ENCODE measurements at regions of chr12 and their contacts with region 1.

Region 1: DNA sequence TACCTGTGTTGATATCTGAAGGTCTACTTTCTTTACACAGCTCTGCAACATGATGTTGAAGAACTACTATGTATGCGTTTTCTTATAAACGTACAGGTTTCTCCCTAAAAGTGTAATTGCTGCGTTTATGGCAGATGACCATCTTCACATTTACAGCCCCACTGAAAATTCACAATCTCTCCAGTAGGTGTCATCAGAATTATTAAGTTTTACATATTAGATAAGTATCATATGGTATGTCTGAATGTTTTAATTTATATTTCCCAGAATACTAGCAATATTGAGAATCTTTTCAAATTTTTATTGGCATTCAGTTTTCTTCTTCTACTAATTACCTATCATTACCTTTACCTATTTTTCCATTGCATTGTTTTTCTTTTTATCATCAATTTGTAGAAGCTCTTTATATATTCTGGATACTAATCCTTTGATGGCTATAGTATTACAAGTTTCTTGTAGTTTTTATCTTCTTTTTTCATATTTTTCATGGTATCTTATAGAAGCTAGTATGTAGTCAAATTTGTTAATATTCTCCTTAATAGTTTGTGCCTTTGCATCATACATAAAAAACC is 123.5 kb downstream of the CAPZA3 start:
- DNase-seq: peak; percentile 60
- H3K4me3 ChIP-seq: no peak overlapping the region
- H3K27ac ChIP-seq: no peak overlapping the region
- H3K4me1 ChIP-seq: no peaks in the 10 kb centered on the region
- H3K27me3 ChIP-seq: peaks cover 2 to 3% of the 10 kb centered on the region in 2 experiments
- CTCF ChIP-seq: peak; percentile 19 to 35
- POLR2A ChIP-seq: no peak

Region 2: DNA sequence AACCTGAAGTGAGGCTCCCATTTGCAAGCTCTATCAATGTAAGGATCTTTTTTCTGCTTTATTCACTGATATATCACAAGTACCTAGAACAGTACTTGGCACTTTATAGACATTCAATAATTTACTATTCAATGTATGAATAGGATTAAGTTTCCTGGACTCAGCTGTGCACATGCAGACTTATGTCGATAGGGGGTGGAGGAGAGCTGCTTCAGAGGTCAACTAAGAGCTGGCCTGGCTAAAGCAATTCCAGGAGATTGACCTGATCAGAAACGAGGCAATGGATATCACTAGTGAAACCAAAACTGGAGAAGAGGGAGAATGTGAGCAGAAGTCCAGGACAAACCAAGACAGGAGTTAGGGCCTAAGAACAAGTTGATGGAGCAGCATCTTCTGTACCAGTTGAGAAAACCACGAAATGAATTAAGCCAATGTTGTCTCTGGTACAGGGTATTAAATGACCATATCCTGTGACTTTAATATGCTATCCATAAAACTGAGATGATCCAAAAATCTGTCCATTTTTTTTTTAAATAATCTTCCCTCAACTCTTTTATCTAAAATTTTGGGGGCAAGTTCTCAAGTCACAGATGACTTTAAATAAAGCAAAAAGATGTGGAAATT is 430.8 kb before region 1 on chr12:
- CTCF ChIA-PET with region 1: no interaction called
- POLR2A ChIA-PET with region 1: no interaction called
- dilution Hi-C with region 1: no loop called
- intact Hi-C with region 1: loop called (anchors 10 kb)
- DNase-seq: peak; percentile 62
- H3K4me3 ChIP-seq: no peak overlapping the region
- H3K27ac ChIP-seq: no peak overlapping the region
- H3K4me1 ChIP-seq: no peaks in the 10 kb centered on the region
- H3K27me3 ChIP-seq: no peaks in the 10 kb centered on the region
- CTCF ChIP-seq: peak; percentile 69 to 77
- POLR2A ChIP-seq: no peak

Region 3: DNA sequence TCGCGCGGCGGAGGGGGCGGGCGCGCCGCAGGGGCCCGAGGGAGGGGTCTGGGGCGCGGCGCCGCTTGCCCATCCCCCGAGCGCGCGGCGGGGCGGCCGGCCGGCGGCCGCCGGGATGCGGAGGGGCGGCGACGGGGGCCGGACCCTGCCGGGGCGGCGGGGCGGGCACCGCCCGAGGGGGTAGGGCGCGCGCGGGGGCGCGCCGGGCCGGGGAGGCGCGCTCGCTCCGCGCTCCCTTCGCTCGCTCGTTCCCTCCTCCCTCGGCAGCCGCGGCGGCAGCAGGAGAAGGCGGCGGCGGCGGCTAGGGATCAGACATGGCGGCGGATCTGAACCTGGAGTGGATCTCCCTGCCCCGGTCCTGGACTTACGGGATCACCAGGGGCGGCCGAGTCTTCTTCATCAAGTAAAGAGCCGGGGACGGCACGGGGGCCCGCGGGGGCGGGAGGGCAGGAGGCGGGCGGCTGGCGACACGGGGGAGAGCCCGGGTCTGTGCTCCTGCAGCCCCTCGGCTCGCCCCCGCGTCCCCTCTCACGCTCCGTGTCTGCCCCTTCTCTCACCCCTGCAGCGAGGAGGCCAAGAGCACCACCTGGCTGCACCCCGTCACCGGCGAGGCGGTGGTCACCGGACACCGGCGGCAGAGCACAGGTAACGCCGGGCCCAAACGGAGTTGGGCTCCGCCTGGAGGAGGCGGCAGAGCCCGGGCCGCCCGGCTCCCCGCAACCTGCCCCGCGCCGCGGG is 268.3 kb after region 1 on chr12 and contains the start of gene PLEKHA5:
- CTCF ChIA-PET with region 1: no interaction called
- POLR2A ChIA-PET with region 1: interaction called, 14 read pairs
- dilution Hi-C with region 1: no loop called
- intact Hi-C with region 1: no loop called
- DNase-seq: peak; percentile 31
- H3K4me3 ChIP-seq: peak within 1 kb of the TSS; percentile 62 to 100 (median 69)
- H3K27ac ChIP-seq: peak within 1 kb of the TSS; percentile 34
- H3K4me1 ChIP-seq: peaks cover 8% of the 10 kb centered on the region
- H3K27me3 ChIP-seq: no peaks in the 10 kb centered on the region
- CTCF ChIP-seq: no peak
- POLR2A ChIP-seq: peak; percentile 16
- total RNA-seq, gene PLEKHA5: 12.7 and 13.4 TPM in 2 replicates

Region 4: DNA sequence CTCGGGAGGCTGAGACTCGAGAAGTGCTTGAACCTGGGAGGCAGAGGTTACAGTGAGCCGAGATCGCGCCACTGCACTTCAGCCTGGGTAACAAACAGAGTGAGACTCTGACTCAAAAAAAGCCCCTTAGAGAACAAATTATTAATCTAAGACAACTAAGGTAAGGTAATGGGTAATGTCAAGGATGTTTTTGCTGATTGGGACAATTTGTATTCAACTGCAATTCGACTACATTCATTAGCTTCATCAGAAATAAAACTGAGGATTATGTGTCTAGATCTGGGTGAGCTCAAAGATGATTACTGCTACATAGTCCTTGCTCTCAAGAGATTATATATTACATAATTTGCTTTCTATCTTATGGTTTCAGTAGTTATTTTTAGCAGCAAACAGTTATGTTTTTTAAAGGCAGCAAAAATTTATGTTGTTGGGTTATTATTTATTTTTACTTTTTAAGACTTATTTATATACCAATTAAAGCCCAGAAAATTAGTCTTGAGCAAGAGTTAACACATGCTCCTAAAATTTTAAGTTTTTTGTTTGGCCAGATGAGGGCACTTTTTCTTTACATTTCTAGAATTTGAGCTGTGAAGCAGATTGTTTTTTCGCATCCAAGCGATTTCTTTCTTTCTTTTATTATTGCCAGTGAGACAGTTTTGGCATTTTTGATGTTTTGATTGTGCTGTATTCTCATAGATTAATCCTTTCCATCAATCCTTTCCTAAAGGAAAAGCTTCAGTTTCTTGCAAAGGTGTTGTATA is 320.5 kb after region 1 on chr12:
- CTCF ChIA-PET with region 1: interaction called, 69 read pairs
- POLR2A ChIA-PET with region 1: no interaction called
- dilution Hi-C with region 1: no loop called
- intact Hi-C with region 1: loop called (anchors 1 kb)
- DNase-seq: peak; percentile 26
- H3K4me3 ChIP-seq: no peak overlapping the region
- H3K27ac ChIP-seq: no peak overlapping the region
- H3K4me1 ChIP-seq: no peaks in the 10 kb centered on the region
- H3K27me3 ChIP-seq: no peaks in the 10 kb centered on the region
- CTCF ChIP-seq: no peak
- POLR2A ChIP-seq: no peak

Region 5: GRCh38 chr12:19546611-19547162 is 685.3 kb after region 1 on chr12:
- CTCF ChIA-PET with region 1: no interaction called
- POLR2A ChIA-PET with region 1: no interaction called
- dilution Hi-C with region 1: no loop called
- intact Hi-C with region 1: no loop called
- DNase-seq: peak; percentile 92
- H3K4me3 ChIP-seq: peak overlapping the region in 1 of 3 experiments; percentile 22
- H3K27ac ChIP-seq: peak overlapping the region; percentile 84
- H3K4me1 ChIP-seq: peaks cover 23% of the 10 kb centered on the region
- H3K27me3 ChIP-seq: no peaks in the 10 kb centered on the region
- CTCF ChIP-seq: no peak
- POLR2A ChIP-seq: no peak

Measured in endothelial cell of umbilical vein (primary cell).